Activated CD4-positive, alpha-beta T cell treated with anti-CD3 and anti-CD28 coated beads, Interleukin-2, amount 10 ng/mL, durations not matched to agents 24 days and 14 days (primary cell): ENCODE measurements at regions of chr13 and their contacts with region 1.

Region 1: GRCh38 chr13:44484562-44485138 is 91.5 kb downstream of the TSC22D1 start:
- DNase-seq: peak; percentile 60
- H3K4me3 Mint-ChIP-seq: peak overlapping the region; percentile 64
- H3K27ac Mint-ChIP-seq: no peak overlapping the region
- H3K4me1 Mint-ChIP-seq: peaks cover 8% of the 10 kb centered on the region
- H3K27me3 Mint-ChIP-seq: peaks cover 3% of the 10 kb centered on the region

Region 2: GRCh38 chr13:44331912-44332851 is 152.5 kb before region 1 on chr13:
- intact Hi-C with region 1: no loop called
- DNase-seq: no peak
- H3K4me3 Mint-ChIP-seq: no peak overlapping the region
- H3K27ac Mint-ChIP-seq: peak overlapping the region; percentile 22
- H3K4me1 Mint-ChIP-seq: peaks cover 2% of the 10 kb centered on the region
- H3K27me3 Mint-ChIP-seq: no peaks in the 10 kb centered on the region

Region 3: GRCh38 chr13:44768239-44768638 is 283.6 kb after region 1 on chr13:
- intact Hi-C with region 1: no loop called
- DNase-seq: peak; percentile 88
- H3K4me3 Mint-ChIP-seq: peak overlapping the region; percentile 54
- H3K27ac Mint-ChIP-seq: peak overlapping the region; percentile 79
- H3K4me1 Mint-ChIP-seq: peaks cover 35% of the 10 kb centered on the region
- H3K27me3 Mint-ChIP-seq: no peaks in the 10 kb centered on the region

Region 4: GRCh38 chr13:44879463-44880058 is 394.9 kb after region 1 on chr13:
- intact Hi-C with region 1: loop called (anchors 1 kb)
- DNase-seq: peak; percentile 65
- H3K4me3 Mint-ChIP-seq: no peak overlapping the region
- H3K27ac Mint-ChIP-seq: no peak overlapping the region
- H3K4me1 Mint-ChIP-seq: peaks cover 4% of the 10 kb centered on the region
- H3K27me3 Mint-ChIP-seq: peaks cover 6% of the 10 kb centered on the region

Region 5: GRCh38 chr13:44969551-44970484 is 485.2 kb after region 1 on chr13:
- intact Hi-C with region 1: loop called (anchors 1 kb)
- DNase-seq: no peak
- H3K4me3 Mint-ChIP-seq: no peak overlapping the region
- H3K27ac Mint-ChIP-seq: no peak overlapping the region
- H3K4me1 Mint-ChIP-seq: peaks cover 2% of the 10 kb centered on the region
- H3K27me3 Mint-ChIP-seq: no peaks in the 10 kb centered on the region